ENCODE measurements at regions of chr2 and their contacts with region 1.

Region 1: DNA sequence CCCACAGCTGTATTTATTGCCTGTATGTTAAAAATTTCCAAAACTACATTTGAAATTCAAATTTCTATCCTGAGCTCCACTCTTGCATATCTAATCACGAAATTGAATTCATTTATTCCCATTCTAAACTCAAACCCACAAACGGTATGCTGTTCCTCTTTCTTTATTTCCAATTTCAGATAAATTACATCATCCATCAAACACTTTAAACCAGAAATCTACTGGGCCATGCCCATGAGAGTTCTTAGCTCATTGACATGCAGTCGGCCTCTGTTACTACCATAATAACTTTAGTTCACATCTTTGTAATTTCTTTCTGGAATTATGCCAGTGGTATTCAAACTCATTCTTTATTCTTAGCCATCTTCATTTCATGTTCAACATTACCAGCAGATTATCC is 100.3 kb downstream of the COL3A1 start:
- DNase-seq: no peak
- ATAC-seq: no peak
- H3K4me3 ChIP-seq: no peak overlapping the region
- H3K27ac ChIP-seq: no peak overlapping the region
- H3K4me1 ChIP-seq: no peaks in the 10 kb centered on the region
- H3K27me3 ChIP-seq: no peaks in the 10 kb centered on the region
- CTCF ChIP-seq: no peak

Region 2: DNA sequence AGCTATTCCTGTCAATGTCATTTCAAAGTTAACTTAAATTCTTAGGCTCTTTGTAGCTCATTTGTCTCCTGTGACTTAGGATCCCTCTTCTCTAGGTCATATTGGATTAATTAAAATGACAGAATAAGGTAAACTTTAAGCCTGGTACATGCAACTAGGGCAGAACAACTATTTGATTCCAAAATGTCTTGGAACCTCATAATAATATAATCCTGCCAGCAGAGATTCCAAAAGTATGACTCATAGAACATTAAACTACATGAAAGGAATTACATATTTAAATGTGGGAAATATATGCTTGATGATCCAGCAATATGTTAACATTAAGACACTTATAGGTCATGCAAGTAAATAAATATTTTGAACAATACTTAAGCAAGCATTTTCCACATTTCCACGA is 37.0 kb before region 1 on chr2:
- CTCF ChIA-PET with region 1: no interaction called
- POLR2A ChIA-PET with region 1: no interaction called
- intact Hi-C with region 1: loop called (anchors 5 kb)
- DNase-seq: peak; percentile 80
- ATAC-seq: peak; percentile 82
- H3K4me3 ChIP-seq: no peak overlapping the region
- H3K27ac ChIP-seq: no peak overlapping the region
- H3K4me1 ChIP-seq: peaks cover 7% of the 10 kb centered on the region
- H3K27me3 ChIP-seq: no peaks in the 10 kb centered on the region
- CTCF ChIP-seq: no peak

Region 3: DNA sequence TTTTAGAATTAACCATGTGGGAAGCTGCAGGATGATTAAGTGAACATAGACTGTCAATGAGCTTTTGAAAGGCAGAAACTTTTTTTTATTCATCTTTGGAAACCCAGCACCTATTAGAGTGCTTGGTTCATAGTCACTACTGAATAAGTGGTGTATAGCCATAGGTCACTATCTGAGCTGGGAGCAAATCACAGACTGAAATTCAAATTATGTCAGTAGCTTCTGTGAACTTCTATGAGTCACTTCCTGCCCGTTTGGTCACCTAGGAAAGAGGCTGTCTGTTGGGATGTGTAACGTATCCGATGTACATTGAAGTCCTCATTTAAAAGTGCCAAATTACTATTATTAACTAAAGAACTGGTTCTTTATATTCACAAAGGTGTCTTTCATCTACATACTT is 526.5 kb after region 1 on chr2:
- CTCF ChIA-PET with region 1: no interaction called
- POLR2A ChIA-PET with region 1: no interaction called
- intact Hi-C with region 1: no loop called
- DNase-seq: peak; percentile 29
- ATAC-seq: no peak
- H3K4me3 ChIP-seq: no peak overlapping the region
- H3K27ac ChIP-seq: no peak overlapping the region
- H3K4me1 ChIP-seq: no peaks in the 10 kb centered on the region
- H3K27me3 ChIP-seq: no peaks in the 10 kb centered on the region
- CTCF ChIP-seq: no peak